Transverse colon (tissue), 4 donors: ENCODE measurements at regions of chr5 and their contacts with region 1.

Region 1: DNA sequence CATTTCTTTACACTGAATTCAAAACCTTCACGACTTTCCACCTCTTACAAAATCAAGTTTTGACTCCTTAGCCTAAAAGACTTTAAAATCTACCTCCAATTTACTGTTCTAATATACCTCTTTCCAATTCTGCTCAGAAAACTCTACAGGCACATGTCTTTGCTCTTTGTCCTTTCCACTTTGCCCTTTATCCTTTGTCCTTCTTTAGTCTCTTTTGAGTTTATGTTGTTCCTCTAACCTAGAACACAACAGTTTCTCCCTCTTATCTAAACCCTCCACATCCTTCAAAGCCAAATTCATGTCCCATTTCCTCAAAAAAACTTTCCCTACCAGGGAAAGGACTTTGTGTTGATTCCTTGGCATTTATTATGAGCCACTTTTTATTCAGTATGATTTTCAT is 1.4 kb downstream of the CDKL3 start:
- DNase-seq: no peak
- H3K4me3 ChIP-seq: no peak overlapping the region
- H3K27ac ChIP-seq: no peak overlapping the region
- H3K4me1 ChIP-seq: peaks cover 4 to 25% (median 18%) of the 10 kb centered on the region in 4 donors
- H3K27me3 ChIP-seq: no peaks in the 10 kb centered on the region
- CTCF ChIP-seq: no peak
- EP300 ChIP-seq: no peak
- POLR2A ChIP-seq: no peak

Region 2: GRCh38 chr5:134018154-134018985 is 347.2 kb before region 1 on chr5:
- in situ Hi-C with region 1: no loop called
- intact Hi-C with region 1: no loop called
- DNase-seq: peak; percentile 90
- H3K4me3 ChIP-seq: no peak overlapping the region
- H3K27ac ChIP-seq: peak overlapping the region; percentile 82 to 88 (median 86)
- H3K4me1 ChIP-seq: peaks cover 9 to 54% (median 33%) of the 10 kb centered on the region in 4 donors
- H3K27me3 ChIP-seq: no peaks in the 10 kb centered on the region
- CTCF ChIP-seq: no peak
- EP300 ChIP-seq: peak; percentile 59
- POLR2A ChIP-seq: peak; percentile 57

Region 3: GRCh38 chr5:134304311-134304710 is 61.3 kb before region 1 on chr5:
- in situ Hi-C with region 1: loop called in 1 of 4 experiments (anchors 10 kb)
- intact Hi-C with region 1: no loop called
- DNase-seq: no peak
- H3K4me3 ChIP-seq: no peak overlapping the region
- H3K27ac ChIP-seq: no peak overlapping the region
- H3K4me1 ChIP-seq: peaks cover 0 to 5% (median 2%) of the 10 kb centered on the region in 4 donors
- H3K27me3 ChIP-seq: no peaks in the 10 kb centered on the region
- CTCF ChIP-seq: no peak
- EP300 ChIP-seq: no peak
- POLR2A ChIP-seq: no peak

Region 4: DNA sequence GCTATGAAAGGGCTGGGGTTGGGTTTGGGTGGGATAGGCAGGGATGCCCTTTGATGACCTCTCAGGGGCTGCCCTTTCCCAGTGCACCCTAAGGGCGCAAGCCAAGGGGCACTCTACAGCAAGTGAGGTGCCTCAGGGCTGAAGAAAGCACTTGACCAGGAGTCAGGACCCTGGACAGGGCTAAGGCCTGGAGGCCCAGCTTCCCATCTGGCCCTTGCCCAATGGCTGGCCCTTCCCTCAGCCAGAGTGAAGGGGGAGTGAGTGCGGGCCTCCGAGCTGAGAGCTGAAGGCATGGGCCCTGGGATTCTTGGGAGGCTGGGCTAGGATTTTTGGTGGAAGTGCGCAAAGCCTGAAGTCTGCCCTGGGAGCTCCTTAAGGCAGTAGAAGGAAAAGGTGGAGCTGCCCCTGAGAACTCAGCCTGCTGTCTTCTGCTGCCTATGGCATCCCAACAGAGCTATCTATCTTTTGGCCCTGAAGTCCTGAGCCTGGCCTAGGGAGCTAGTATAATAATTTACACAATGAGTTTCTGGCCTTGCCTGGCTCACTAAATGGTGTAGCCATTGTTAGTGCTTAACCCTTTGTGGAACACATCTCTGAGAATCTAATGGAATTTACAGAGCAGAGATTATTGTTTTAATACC is 176.3 kb after region 1 on chr5:
- in situ Hi-C with region 1: no loop called
- intact Hi-C with region 1: no loop called
- DNase-seq: peak; percentile 21
- H3K4me3 ChIP-seq: no peak overlapping the region
- H3K27ac ChIP-seq: no peak overlapping the region
- H3K4me1 ChIP-seq: peaks cover 14 to 42% (median 23%) of the 10 kb centered on the region in 4 donors
- H3K27me3 ChIP-seq: no peaks in the 10 kb centered on the region
- CTCF ChIP-seq: no peak
- EP300 ChIP-seq: no peak
- POLR2A ChIP-seq: no peak